Pancreas (tissue), 10 donors: ENCODE measurements at regions of chr22 and their contacts with region 1.

Region 1: DNA sequence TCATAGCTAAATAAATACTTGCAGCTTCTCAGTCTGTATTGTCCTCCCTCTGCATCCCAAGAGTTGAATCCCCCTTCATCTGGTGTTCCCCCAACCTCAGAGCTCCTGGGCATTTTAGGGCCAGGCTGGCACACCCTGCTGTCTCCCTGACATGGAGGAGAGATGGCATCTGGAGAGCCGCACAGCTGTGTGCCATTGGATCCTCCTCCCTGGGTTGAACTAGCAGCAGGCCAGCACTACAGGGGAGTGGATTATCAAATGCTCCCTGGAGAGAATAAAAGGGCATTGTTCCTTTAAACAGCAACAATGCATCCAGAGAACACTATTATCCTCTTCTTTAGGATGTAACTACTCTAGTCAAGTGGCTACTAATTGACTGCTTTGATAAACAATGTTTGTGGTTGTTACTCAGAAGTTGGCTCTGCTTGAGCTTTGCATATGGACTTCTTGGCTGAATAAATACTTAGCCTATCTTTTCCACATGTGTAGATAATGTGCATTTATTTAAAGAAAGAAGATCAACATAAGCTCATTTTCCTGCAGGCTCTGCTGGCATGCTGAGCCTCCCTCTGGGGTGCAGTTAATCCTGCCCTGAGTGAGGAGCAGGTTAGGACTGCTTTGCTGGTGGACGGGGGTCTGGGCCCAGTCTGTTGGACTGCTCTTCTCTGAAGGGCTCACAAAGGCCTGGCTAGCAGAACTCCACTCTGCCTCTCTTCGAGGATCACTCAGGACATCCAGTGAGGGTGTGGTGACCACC is 897.2 kb downstream of the TBC1D22A start:
- DNase-seq: no peak
- ATAC-seq: no peak
- H3K4me3 ChIP-seq: no peak overlapping the region
- H3K27ac ChIP-seq: no peak overlapping the region
- H3K4me1 ChIP-seq: no peaks in the 10 kb centered on the region
- H3K27me3 ChIP-seq: peaks cover 0 to 3% (median 0%) of the 10 kb centered on the region in 4 donors
- CTCF ChIP-seq: no peak

Region 2: GRCh38 chr22:47713941-47714340 is 54.3 kb after region 1 on chr22:
- intact Hi-C with region 1: loop called in 1 of 3 experiments (anchors 10 kb)
- DNase-seq: no peak
- ATAC-seq: no peak
- H3K4me3 ChIP-seq: no peak overlapping the region
- H3K27ac ChIP-seq: no peak overlapping the region
- H3K4me1 ChIP-seq: no peaks in the 10 kb centered on the region
- H3K27me3 ChIP-seq: peaks cover 0 to 9% (median 2%) of the 10 kb centered on the region in 4 donors
- CTCF ChIP-seq: no peak

Region 3: DNA sequence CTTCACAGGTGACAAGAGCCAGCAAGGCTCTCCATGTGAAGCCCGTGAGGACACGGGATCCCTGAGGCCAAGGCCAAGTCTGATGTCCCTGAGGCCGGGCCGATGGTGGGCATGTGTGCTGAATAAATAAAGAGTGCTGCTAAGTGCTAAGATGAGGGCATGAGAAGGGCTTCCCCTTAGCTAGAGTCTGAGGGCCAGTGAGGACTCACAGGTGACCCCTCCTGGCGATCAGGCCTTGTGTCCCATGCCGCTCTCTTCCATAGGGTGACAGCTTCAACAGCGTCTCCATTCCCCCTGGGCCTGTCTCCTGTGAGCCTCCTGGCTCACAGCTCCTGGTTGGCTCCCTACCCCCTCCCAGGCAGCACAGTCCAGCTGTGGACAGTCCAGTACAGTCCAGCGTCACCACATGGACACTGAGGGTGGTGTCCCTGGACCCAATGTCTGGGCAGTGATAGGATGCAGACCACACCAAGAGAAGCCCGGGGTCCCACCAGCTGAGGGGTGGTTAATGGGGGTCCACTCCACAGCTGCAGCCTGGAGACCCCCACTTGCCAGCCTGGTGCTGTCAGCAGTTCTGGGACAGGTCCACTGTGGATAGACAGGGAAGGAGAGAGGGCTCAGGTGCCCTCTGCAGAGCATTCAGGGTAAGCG is 136.0 kb after region 1 on chr22:
- intact Hi-C with region 1: no loop called
- DNase-seq: peak in 1 of 6 donors; percentile 22
- ATAC-seq: no peak
- H3K4me3 ChIP-seq: no peak overlapping the region
- H3K27ac ChIP-seq: no peak overlapping the region
- H3K4me1 ChIP-seq: no peaks in the 10 kb centered on the region
- H3K27me3 ChIP-seq: no peaks in the 10 kb centered on the region
- CTCF ChIP-seq: no peak